ENCODE measurements at regions of chr3 and their contacts with region 1.

Region 1: GRCh38 chr3:191336833-191337232 is 6.5 kb upstream of the UTS2B start:
- DNase-seq: no peak
- ATAC-seq: no peak
- H3K4me3 ChIP-seq: no peak overlapping the region
- H3K27ac ChIP-seq: no peak overlapping the region
- H3K4me1 ChIP-seq: peaks cover 2 to 95% (median 77%) of the 10 kb centered on the region in 12 donors
- H3K27me3 ChIP-seq: no peaks in the 10 kb centered on the region
- CTCF ChIP-seq: no peak
- POLR2A ChIP-seq: no peak

Region 2: DNA sequence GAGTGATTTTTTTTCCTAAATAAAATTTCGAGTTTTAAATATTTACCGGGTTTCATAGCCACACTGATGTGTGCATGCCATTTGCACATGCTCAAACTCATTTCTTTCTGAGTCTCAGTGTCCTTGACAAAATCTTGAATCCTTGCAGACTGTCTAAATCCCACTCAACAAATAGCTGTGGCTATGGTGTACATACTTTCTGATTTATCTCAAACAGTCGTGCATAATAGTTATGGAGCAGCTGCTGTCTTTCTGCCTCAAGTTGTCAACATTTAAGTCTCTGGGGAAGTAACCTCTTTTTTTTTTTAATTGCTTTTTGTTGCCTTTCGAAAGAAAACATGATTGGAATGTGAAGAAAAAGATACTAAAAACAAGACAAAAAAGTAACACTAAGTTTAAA is 46.3 kb after region 1 on chr3:
- intact Hi-C with region 1: loop called in 5 of 10 experiments (anchors 5 to 10 kb)
- DNase-seq: no peak
- ATAC-seq: peak; percentile 39 to 86 (median 64)
- H3K4me3 ChIP-seq: no peak overlapping the region
- H3K27ac ChIP-seq: peak overlapping the region in 4 of 12 donors; percentile 31 to 59 (median 42)
- H3K4me1 ChIP-seq: peaks cover 0 to 36% (median 20%) of the 10 kb centered on the region in 12 donors
- H3K27me3 ChIP-seq: no peaks in the 10 kb centered on the region
- CTCF ChIP-seq: no peak
- POLR2A ChIP-seq: no peak

Region 3: GRCh38 chr3:191470545-191470944 is 133.7 kb after region 1 on chr3:
- intact Hi-C with region 1: no loop called
- DNase-seq: peak in 1 of 5 donors; percentile 33
- ATAC-seq: no peak
- H3K4me3 ChIP-seq: no peak overlapping the region
- H3K27ac ChIP-seq: no peak overlapping the region
- H3K4me1 ChIP-seq: peaks cover 0 to 5% (median 0%) of the 10 kb centered on the region in 12 donors
- H3K27me3 ChIP-seq: no peaks in the 10 kb centered on the region
- CTCF ChIP-seq: no peak
- POLR2A ChIP-seq: no peak

Region 4: GRCh38 chr3:191641789-191642188 is 305.0 kb after region 1 on chr3:
- intact Hi-C with region 1: no loop called
- DNase-seq: no peak
- ATAC-seq: peak in 1 of 4 donors; percentile 18
- H3K4me3 ChIP-seq: no peak overlapping the region
- H3K27ac ChIP-seq: no peak overlapping the region
- H3K4me1 ChIP-seq: no peaks in the 10 kb centered on the region
- H3K27me3 ChIP-seq: no peaks in the 10 kb centered on the region
- CTCF ChIP-seq: no peak
- POLR2A ChIP-seq: no peak